ENCODE measurements at regions of chr6 and their contacts with region 1.

Region 1: DNA sequence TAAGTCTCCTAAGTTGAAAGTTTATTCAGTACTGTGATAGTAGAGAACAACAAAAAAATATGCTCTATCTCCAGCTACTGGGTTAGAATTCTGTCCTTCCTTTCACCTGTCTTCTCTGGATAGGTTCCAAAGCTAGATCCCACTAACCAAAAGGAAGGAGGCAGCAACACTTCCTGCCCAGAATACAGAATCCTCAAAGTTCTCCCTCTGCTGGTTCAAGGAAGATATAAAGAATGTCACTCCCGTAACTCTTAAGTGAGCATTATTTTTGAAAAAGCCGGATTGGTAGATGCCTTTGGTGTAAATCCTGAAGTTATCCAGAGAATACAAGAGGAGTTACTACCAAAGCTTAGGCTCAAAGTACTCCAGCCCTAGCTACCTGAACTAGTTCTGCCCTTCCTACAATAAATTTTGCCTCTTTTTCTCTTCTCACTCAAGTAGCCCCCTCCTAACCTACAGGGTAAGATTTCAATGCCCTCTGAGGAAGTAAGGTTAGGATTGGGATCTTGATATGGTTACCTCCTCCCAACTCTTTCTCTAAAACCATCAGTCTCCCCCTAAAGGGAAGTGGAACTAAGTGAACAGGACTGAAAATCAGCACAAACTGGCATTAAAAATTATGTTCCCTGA is 26.0 kb upstream of the CRIP3 start:
- DNase-seq: peak; percentile 9
- H3K4me3 ChIP-seq: no peak overlapping the region
- CTCF ChIP-seq: peak; percentile 42

Region 2: DNA sequence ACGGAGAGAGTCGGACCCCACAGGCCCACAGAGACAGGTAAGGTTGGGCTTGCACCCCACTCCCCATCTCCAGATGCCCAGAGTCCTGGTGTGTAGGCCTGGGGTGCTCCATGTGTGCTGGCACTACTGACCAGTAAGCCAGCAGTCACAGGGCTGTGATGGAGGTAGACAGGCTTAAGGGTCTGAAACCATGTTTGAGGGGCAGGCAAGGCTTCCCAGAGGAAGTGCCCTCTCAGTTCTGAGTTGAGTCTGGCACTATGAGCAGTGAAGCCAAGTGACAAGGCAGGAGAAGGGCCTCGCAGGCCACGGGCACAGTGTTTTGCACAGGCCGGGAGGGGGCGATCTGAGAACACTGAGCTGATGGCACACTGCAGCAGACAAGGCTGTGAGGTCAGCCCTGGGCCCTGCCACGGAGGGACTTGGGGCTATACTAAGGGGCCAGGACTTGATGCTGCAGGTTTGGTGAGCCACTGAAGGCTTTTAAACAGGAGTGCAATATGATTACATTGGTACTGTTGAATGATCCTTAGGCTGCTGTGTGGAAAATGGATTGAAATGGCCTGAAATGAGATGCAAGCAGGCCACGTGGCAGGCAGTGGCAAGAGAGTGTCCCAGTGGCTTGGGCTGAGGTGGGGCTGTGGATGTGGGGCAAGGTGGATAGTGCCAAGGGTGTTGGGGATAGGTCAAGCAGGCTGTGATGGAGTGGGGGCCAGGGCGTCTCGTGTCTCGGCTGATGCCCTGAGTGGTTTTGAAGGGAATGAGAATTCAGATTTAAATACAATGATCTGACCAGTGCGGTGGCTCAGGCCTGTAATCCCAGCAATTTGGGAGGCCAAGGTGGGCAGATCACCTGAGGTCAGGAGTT is 71.0 kb before region 1 on chr6:
- CTCF ChIA-PET with region 1: interaction called, 156 read pairs
- POLR2A ChIA-PET with region 1: no interaction called
- DNase-seq: no peak
- H3K4me3 ChIP-seq: no peak overlapping the region
- CTCF ChIP-seq: peak; percentile 96

Region 3: DNA sequence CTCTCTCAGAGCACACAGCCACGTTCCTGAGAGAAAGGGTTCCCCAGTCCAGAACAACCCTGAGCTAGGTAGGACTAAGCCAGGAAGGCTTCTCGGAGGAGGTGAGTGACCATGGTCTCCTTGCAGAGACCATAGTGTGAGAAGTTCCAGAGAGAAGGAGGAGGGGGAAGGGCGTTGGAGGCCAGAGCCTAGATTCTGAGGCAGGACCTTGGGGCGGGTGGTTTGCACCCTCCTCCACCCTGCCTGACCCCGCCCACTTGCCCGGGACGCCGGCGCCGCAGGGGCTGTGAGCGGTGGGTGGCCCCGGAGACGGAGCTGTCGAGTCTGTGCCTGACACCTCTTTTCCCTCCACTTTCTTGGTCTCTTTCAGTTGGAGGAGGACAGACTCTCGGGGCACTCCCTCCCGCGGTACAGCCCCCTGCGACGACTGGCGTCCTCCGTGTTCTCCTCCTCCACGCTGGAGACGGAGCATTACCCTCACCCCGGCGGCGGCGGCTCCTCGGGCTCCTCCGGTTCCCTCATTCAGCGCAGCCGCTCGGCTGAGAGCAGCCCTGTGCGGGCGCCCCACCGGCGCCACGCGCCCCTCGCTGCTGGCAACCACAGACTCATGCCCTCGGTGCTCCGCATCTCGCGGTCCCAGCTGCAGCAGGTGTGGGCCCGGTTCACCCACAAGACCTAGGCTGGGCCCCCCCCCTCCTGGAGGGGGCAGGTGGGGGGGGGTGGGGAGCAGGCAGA is 65.1 kb before region 1 on chr6:
- CTCF ChIA-PET with region 1: interaction called, 156 read pairs
- POLR2A ChIA-PET with region 1: no interaction called
- DNase-seq: no peak
- H3K4me3 ChIP-seq: peak overlapping the region; percentile 38
- CTCF ChIP-seq: no peak

Region 4: DNA sequence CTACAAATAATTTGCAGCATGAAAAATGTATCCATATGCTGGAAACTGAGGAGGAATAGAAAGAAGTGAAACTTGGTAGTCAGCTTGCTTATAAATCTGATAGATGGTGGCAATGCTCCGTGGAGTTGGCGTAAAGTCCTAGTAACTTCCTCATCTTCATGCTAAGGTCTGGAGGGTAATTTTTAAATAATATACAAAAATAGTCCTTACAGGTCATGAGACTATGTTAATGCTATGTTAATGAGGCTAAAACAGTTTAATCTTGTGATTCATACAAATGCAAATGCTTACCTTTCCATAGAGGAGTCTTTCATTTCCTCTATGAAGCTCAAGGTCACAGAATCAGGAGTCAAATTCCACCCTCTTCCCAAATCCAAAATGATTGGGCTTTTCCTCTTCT is 16.6 kb before region 1 on chr6:
- CTCF ChIA-PET with region 1: interaction called, 25 read pairs
- POLR2A ChIA-PET with region 1: no interaction called
- DNase-seq: no peak
- H3K4me3 ChIP-seq: no peak overlapping the region
- CTCF ChIP-seq: no peak

Region 5: GRCh38 chr6:43355862-43356590 is 21.4 kb after region 1 on chr6:
- CTCF ChIA-PET with region 1: interaction called, 28 read pairs
- POLR2A ChIA-PET with region 1: no interaction called
- DNase-seq: no peak
- H3K4me3 ChIP-seq: no peak overlapping the region
- CTCF ChIP-seq: peak; percentile 34

Region 6: GRCh38 chr6:43361269-43361668 is 26.7 kb after region 1 on chr6:
- CTCF ChIA-PET with region 1: interaction called, 28 read pairs
- POLR2A ChIA-PET with region 1: no interaction called
- DNase-seq: no peak
- H3K4me3 ChIP-seq: no peak overlapping the region
- CTCF ChIP-seq: no peak

Region 7: DNA sequence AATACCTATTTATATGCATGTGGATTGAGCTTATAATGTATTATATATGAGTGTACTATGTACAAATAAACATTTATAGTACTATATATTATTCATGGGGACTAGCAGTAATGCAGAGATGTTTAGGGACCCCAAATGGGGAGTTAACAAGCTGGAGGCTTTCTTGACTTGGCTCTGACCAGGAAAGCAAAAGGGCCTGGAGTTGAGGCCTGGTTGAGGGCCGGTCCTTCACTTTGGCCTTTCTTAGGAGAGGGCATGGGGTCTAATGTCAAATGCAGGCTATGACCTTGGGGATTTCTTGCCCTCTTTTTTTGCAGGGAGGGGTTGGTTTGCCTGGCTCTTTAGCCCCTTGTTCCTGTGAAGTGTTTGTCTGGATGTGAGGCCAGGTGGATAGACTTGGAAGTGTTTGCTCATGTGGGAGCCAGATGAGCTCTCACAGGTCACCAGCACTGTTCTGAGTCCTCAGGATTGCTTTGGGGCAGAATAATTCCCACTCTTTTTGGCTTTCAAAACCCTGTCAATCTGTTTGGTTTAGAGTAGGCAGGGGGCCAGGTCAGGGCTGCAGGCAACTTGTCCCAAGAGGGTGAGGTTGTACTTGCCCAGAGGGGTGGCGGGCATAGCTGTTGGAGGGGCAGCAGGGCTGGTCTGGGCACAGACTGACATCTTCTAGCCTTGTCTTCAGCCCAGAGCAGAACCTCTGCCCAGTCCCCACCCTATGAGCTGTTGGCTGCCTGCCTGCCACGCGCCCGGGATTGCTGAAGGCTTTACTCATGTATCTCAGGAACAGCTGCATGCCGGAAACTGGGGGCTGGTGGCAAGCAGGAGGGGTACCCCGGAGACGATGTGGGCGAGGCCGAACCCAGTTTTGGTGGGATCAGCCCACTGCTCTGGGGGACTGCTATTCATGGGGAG is 157.4 kb after region 1 on chr6:
- CTCF ChIA-PET with region 1: no interaction called
- POLR2A ChIA-PET with region 1: no interaction called
- DNase-seq: no peak
- H3K4me3 ChIP-seq: no peak overlapping the region; the same call in 1 of the 2 replicates
- CTCF ChIP-seq: no peak

Region 8: DNA sequence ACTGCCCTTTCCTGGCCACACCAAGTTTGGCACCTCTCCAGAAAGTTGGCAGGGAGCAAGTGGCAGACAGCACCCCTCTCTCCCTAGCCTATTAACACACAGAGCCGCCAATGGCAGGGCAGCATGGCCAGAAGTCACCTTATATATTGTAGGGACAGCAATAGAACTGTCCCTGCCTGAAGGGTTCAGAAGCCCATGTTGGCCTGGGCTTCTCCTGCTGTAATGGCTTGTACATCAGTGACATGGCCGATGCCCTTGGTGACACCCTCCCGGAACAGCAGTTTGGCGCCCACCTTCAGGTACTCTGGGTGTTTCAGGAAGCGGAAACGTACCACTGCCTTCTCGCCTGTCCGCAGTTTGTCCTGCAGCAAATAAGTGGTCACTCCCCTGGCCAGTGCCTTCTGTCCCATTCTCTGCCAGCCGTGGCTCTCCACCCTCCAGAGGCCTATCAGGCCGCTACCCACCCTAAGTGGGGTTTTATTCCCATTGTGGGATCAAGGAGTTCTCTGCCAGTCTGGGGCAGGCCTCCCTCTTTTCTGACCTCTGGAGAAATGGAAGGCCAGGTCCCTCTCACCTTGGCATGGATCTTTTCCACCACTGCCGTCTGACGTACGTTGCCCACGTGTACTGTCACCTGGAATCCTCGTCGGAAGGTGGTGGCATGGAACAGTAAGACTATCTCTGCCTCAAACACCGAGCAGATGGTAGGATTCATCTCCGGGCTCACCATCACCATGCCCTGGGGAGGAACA is 287.0 kb after region 1 on chr6:
- CTCF ChIA-PET with region 1: no interaction called
- POLR2A ChIA-PET with region 1: no interaction called
- DNase-seq: no peak
- H3K4me3 ChIP-seq: no peak overlapping the region
- CTCF ChIP-seq: no peak

Measured in AG04449 (cell line).